H1 (cell line): ENCODE measurements at regions of chr11 and their contacts with region 1.

Region 1: GRCh38 chr11:128848815-128849455 is 18.2 kb downstream of the KCNJ1 start:
- DNase-seq: peak in 1 of 2 experiments; percentile 97
- H3K4me3 ChIP-seq: no peak overlapping the region
- H3K27ac ChIP-seq: no peak overlapping the region
- H3K4me1 ChIP-seq: no peaks in the 10 kb centered on the region
- H3K27me3 ChIP-seq: no peaks in the 10 kb centered on the region
- CTCF ChIP-seq: peak; percentile 94 to 98 (median 96)
- EP300 ChIP-seq: no peak
- POLR2A ChIP-seq: no peak
- RAD21 ChIP-seq: peak; percentile 72 to 85

Region 2: DNA sequence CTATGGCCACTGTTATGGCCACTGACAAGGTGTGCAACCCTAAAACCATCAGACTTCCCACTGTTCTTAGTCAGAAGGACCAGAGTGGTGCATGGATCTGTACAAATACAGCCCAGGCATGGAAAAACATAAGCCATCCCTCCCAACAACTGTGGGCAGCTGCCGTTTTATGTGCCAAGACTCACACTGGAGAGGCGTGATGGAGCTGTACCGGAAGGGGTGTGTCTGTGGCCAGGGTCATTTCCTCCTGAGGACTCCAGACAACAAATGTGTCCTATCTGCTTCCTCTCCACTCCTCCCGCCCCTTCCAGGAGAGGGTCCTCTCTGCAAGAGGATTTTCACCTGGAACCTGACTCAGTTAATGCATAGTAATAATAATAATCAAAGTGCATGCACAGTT is 11.3 kb before region 1 on chr11:
- CTCF ChIA-PET with region 1: interaction called, 15 read pairs
- POLR2A ChIA-PET with region 1: interaction called, 3 read pairs
- DNase-seq: no peak
- H3K4me3 ChIP-seq: no peak overlapping the region
- H3K27ac ChIP-seq: no peak overlapping the region
- H3K4me1 ChIP-seq: peaks cover 0 to 6% (median 0%) of the 10 kb centered on the region in 4 experiments; a peak in 2 of 7 replicates
- H3K27me3 ChIP-seq: no peaks in the 10 kb centered on the region
- CTCF ChIP-seq: no peak
- EP300 ChIP-seq: no peak
- POLR2A ChIP-seq: no peak
- RAD21 ChIP-seq: no peak

Region 3: GRCh38 chr11:128859563-128860441 is 10.9 kb after region 1 on chr11:
- CTCF ChIA-PET with region 1: interaction called, 69 read pairs
- POLR2A ChIA-PET with region 1: no interaction called
- DNase-seq: peak; percentile 75 to 99
- H3K4me3 ChIP-seq: no peak overlapping the region
- H3K27ac ChIP-seq: no peak overlapping the region
- H3K4me1 ChIP-seq: peaks cover 0 to 6% (median 2%) of the 10 kb centered on the region in 4 experiments; a peak in 6 of 7 replicates
- H3K27me3 ChIP-seq: peaks cover 0 to 8% (median 0%) of the 10 kb centered on the region in 4 experiments; a peak in 3 of 7 replicates
- CTCF ChIP-seq: peak; percentile 93 to 97 (median 95)
- EP300 ChIP-seq: no peak
- POLR2A ChIP-seq: no peak
- RAD21 ChIP-seq: peak; percentile 70 to 83

Region 4: DNA sequence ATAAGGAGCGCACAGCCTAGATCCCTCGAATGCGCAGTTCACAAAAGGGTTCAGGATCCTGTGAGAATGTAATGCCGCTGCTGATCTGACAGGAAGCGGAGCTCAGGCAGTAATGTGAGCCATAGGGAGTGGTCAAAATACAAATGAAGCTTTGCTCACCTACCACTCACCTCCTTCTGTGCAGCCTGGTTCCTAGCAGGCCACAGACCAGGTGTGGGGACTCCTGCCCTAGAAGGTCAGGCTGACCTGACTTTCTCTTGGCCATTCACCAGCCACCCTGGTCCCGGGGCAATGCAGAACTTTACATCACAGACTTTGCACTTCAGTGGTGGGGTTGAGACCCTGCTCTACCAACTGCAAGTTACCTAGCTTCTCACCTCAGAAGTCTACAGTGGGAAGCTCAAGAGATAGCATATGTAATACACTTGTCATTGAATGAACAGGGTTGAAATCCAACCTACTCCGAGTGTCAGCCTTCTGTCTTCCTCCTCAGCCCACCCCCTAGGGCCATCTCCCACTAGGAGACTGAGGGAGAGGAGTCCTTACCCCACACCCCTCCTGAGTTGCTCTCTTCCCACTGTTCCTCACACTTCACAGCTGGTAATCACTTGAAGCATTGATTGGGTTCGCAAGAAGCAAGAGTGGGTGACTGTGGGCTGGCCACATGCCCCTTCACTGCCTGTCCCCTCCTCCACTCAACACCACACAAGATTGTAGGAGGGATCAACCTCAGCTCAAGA is 20.1 kb after region 1 on chr11:
- CTCF ChIA-PET with region 1: interaction called, 18 read pairs
- POLR2A ChIA-PET with region 1: no interaction called
- DNase-seq: no peak
- H3K4me3 ChIP-seq: no peak overlapping the region
- H3K27ac ChIP-seq: no peak overlapping the region
- H3K4me1 ChIP-seq: peaks cover 17 to 35% (median 23%) of the 10 kb centered on the region in 4 experiments
- H3K27me3 ChIP-seq: peaks cover 0 to 8% (median 7%) of the 10 kb centered on the region in 4 experiments; a peak in 3 of 7 replicates
- CTCF ChIP-seq: no peak
- EP300 ChIP-seq: no peak
- POLR2A ChIP-seq: no peak
- RAD21 ChIP-seq: no peak

Region 5: DNA sequence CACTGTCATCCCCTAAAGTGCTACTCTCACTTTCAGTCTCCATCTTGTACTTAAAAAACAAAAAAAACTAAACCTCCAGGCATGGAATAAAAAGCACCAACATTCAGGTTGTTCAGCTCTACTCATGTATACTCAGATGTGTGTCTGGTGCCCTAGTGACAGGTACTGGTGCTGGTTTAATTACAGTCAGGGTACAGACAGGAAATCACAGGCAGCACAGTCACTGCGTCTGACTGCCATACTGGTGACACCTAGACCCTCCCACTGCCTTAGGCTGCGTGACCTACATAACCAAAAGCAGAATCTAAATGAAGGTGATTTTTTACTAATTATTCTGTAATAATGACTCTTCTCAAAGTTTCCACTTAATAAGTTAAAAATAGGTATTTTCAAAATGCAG is 343.2 kb after region 1 on chr11 and contains the start of gene ARHGAP32:
- CTCF ChIA-PET with region 1: no interaction called
- POLR2A ChIA-PET with region 1: no interaction called
- DNase-seq: no peak
- H3K4me3 ChIP-seq: no peak within 1 kb of the TSS
- H3K27ac ChIP-seq: no peak within 1 kb of the TSS
- H3K4me1 ChIP-seq: peaks cover 0 to 7% (median 5%) of the 10 kb centered on the region in 4 experiments; a peak in 6 of 7 replicates
- H3K27me3 ChIP-seq: no peaks in the 10 kb centered on the region
- CTCF ChIP-seq: no peak
- EP300 ChIP-seq: no peak
- POLR2A ChIP-seq: no peak
- RAD21 ChIP-seq: no peak
- total RNA-seq, gene ARHGAP32: 30.0 and 30.1 TPM in 2 replicates